CD8-positive, alpha-beta T cell (primary cell): ENCODE measurements at regions of chr20 and their contacts with region 1.

Region 1: DNA sequence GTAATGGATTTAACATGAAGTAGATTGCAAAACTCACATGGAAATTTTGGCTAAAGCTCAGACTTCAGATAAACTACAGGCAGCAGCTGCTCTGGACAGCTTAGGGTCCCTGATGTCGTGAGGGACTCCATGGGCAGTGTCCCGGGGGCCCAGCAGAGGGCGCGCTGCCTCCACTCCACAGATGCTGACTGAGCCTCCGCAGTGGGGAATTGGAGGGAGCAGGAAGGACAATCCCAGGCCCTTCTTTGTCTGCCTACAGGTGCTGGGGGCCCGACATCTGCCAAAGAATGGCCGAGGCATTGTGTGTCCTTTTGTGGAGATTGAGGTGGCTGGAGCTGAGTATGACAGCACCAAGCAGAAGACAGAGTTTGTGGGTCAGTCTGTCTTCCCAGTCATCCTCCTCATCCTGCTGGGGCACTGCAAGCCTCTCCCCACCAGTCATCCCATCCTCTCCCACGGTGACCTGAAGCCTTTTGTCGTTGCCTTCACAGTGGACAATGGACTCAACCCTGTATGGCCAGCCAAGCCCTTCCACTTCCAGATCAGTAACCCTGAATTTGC is 35.9 kb downstream of the PLCG1 start:
- DNase-seq: peak; percentile 22 to 83 (median 71)
- ATAC-seq: peak; percentile 93
- H3K4me3 ChIP-seq: no peak overlapping the region
- H3K4me3 Mint-ChIP-seq: no peak overlapping the region
- H3K27ac ChIP-seq: peak overlapping the region in 1 of 2 experiments; percentile 29
- H3K27ac Mint-ChIP-seq: peak overlapping the region; percentile 81
- H3K4me1 ChIP-seq: peaks cover 21% of the 10 kb centered on the region
- H3K4me1 Mint-ChIP-seq: peaks cover 43% of the 10 kb centered on the region
- H3K27me3 ChIP-seq: no peaks in the 10 kb centered on the region
- H3K27me3 Mint-ChIP-seq: no peaks in the 10 kb centered on the region
- CTCF ChIP-seq: peak; percentile 74

Region 2: GRCh38 chr20:40970201-40970600 is 203.0 kb before region 1 on chr20:
- CTCF ChIA-PET with region 1: no interaction called
- POLR2A ChIA-PET with region 1: no interaction called
- intact Hi-C with region 1: loop called in 1 of 2 experiments (anchors 2 kb)
- DNase-seq: peak in 1 of 9 experiments; percentile 44
- ATAC-seq: no peak
- H3K4me3 ChIP-seq: no peak overlapping the region
- H3K4me3 Mint-ChIP-seq: no peak overlapping the region
- H3K27ac ChIP-seq: no peak overlapping the region
- H3K27ac Mint-ChIP-seq: no peak overlapping the region
- H3K4me1 ChIP-seq: no peaks in the 10 kb centered on the region
- H3K4me1 Mint-ChIP-seq: peaks cover 7% of the 10 kb centered on the region
- H3K27me3 ChIP-seq: no peaks in the 10 kb centered on the region
- H3K27me3 Mint-ChIP-seq: peaks cover 3% of the 10 kb centered on the region
- CTCF ChIP-seq: no peak

Region 3: GRCh38 chr20:41161886-41162285 is 11.4 kb before region 1 on chr20:
- CTCF ChIA-PET with region 1: interaction called, 94 read pairs
- POLR2A ChIA-PET with region 1: interaction called, 17 read pairs
- intact Hi-C with region 1: no loop called
- DNase-seq: peak in 3 of 9 experiments; percentile 25 to 49 (median 45)
- ATAC-seq: no peak
- H3K4me3 ChIP-seq: no peak overlapping the region
- H3K4me3 Mint-ChIP-seq: peak overlapping the region; percentile 58
- H3K27ac ChIP-seq: peak overlapping the region; percentile 39 to 82
- H3K27ac Mint-ChIP-seq: peak overlapping the region; percentile 92
- H3K4me1 ChIP-seq: peaks cover 88% of the 10 kb centered on the region
- H3K4me1 Mint-ChIP-seq: peaks cover 86% of the 10 kb centered on the region
- H3K27me3 ChIP-seq: no peaks in the 10 kb centered on the region
- H3K27me3 Mint-ChIP-seq: no peaks in the 10 kb centered on the region
- CTCF ChIP-seq: no peak

Region 4: GRCh38 chr20:41218466-41218865 is 45.2 kb after region 1 on chr20:
- CTCF ChIA-PET with region 1: interaction called, 18 read pairs
- POLR2A ChIA-PET with region 1: no interaction called
- intact Hi-C with region 1: no loop called
- DNase-seq: no peak
- ATAC-seq: no peak
- H3K4me3 ChIP-seq: no peak overlapping the region
- H3K4me3 Mint-ChIP-seq: no peak overlapping the region
- H3K27ac ChIP-seq: no peak overlapping the region
- H3K27ac Mint-ChIP-seq: no peak overlapping the region
- H3K4me1 ChIP-seq: no peaks in the 10 kb centered on the region
- H3K4me1 Mint-ChIP-seq: no peaks in the 10 kb centered on the region
- H3K27me3 ChIP-seq: no peaks in the 10 kb centered on the region
- H3K27me3 Mint-ChIP-seq: no peaks in the 10 kb centered on the region
- CTCF ChIP-seq: no peak

Region 5: GRCh38 chr20:41453010-41453950 is 280.0 kb after region 1 on chr20:
- CTCF ChIA-PET with region 1: no interaction called
- POLR2A ChIA-PET with region 1: no interaction called
- intact Hi-C with region 1: no loop called
- DNase-seq: no peak
- ATAC-seq: no peak
- H3K4me3 ChIP-seq: no peak overlapping the region
- H3K4me3 Mint-ChIP-seq: no peak overlapping the region
- H3K27ac ChIP-seq: no peak overlapping the region
- H3K27ac Mint-ChIP-seq: peak overlapping the region; percentile 8
- H3K4me1 ChIP-seq: no peaks in the 10 kb centered on the region
- H3K4me1 Mint-ChIP-seq: no peaks in the 10 kb centered on the region
- H3K27me3 ChIP-seq: no peaks in the 10 kb centered on the region
- H3K27me3 Mint-ChIP-seq: no peaks in the 10 kb centered on the region
- CTCF ChIP-seq: no peak